Activated CD4-positive, alpha-beta T cell treated with anti-CD3 and anti-CD28 coated beads, Interleukin-2, amount 10 ng/mL, durations not matched to agents 24 days and 14 days (primary cell): ENCODE measurements at regions of chr3 and their contacts with region 1.

Region 1: DNA sequence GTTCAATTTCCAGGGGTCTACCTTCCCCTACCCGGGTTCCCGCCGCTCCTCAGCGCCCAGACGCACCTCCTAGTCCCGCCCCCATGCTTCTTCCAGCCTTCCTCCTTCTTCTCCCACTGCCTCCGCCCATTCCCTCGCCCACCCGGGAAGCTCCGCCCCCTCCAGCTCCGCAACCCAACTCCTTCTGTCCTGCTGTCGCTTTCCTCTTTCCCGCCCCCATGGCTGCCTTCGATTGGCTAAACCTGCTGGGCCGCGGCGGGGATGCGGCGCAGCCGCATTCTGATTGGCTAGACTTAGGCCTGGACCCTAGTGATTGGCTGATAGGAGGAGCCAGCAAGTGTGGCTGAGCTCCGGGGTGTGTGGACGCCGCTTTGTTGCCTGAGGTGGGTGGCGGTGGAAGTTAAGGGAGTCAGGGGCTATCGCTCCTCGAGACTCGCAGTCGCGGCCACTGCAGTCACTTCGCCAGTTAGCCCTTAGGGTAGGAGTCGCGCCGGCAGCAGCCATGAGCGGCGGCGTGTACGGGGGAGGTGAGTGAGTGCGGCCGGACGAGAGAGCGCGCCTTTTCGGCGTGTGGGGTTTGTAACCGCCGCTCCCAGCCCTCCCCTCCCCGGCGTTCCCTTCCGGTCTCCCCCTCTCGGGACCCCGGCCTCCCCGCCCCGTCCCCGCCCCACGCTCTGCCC is at the start of gene ACTL6A:
- DNase-seq: peak; percentile 99
- H3K4me3 Mint-ChIP-seq: peak within 1 kb of the TSS; percentile 98
- H3K27ac Mint-ChIP-seq: peak within 1 kb of the TSS; percentile 97
- H3K4me1 Mint-ChIP-seq: peaks cover 27% of the 10 kb centered on the region
- H3K27me3 Mint-ChIP-seq: peaks cover 19% of the 10 kb centered on the region
- total RNA-seq, gene ACTL6A: 127 and 131 TPM in 2 replicates

Region 2: DNA sequence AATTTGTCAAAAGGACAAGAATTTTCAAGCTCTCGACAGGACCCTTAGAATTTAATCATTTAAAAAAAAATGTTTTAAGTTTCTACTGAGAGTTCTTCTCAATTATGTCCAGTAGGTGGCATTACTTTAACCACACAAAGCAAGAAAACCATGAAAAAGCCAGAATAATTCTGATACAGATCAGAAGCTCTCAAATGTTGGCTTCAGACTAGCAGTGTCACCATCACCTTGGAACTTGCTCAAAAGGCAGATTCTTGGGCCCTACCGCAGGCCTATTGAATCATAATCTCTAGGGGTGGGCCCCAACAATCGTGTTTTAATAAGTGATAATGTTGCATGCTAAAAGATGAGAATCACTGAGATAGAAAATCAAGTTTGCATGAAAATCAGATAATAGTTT is 1126.0 kb before region 1 on chr3:
- intact Hi-C with region 1: loop called (anchors 2 kb)
- DNase-seq: no peak
- H3K4me3 Mint-ChIP-seq: no peak overlapping the region
- H3K27ac Mint-ChIP-seq: no peak overlapping the region
- H3K4me1 Mint-ChIP-seq: no peaks in the 10 kb centered on the region
- H3K27me3 Mint-ChIP-seq: no peaks in the 10 kb centered on the region

Region 3: DNA sequence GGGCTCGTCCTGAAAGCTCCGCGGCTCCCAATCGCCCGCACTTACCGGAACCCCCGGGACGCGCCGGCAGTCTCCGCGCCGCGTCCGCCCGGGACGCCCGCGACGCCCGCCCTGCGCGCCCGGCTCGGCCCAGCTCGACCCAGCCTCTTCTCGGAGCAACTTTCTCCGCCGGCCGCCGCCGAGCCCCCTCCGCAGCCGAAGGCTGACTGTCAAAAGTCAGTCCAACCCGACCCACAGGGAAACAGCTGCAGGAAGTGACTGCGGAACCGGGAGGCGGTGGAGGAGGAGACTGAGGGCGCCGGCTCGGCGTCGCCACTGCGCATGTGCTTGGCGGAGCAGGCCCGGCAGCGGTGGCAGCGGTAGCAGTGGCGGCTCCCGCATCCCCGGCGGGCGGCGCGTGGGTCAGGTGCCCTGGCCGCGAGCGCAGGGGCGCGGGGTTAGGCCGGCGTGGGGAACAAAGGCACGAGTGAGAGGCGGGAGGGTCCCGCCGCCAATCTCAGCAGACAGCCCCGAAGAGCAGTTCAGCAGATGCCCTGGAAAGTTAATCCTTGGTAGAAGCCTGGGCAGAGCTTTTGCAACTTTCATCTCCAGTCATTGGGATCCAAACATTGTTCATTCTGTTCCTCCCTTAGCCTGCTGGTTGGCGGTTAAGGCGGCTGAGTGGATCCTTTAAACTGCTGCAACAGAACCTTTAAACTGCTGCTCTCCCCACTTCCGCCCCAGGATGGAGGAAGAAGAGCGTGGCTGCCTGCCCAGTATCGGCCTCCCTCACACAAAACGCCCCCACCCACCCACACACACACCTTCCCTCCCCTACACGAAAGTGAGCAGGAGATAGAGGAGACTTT is 491.0 kb before region 1 on chr3 and contains the start of gene ZMAT3:
- intact Hi-C with region 1: loop called (anchors 2 kb)
- DNase-seq: peak; percentile 96
- H3K4me3 Mint-ChIP-seq: peak within 1 kb of the TSS; percentile 99
- H3K27ac Mint-ChIP-seq: peak within 1 kb of the TSS; percentile 96
- H3K4me1 Mint-ChIP-seq: peaks cover 35% of the 10 kb centered on the region
- H3K27me3 Mint-ChIP-seq: no peaks in the 10 kb centered on the region
- total RNA-seq, gene ZMAT3: 11.8 and 13.1 TPM in 2 replicates

Region 4: GRCh38 chr3:179347345-179348194 is 215.2 kb before region 1 on chr3 and contains the start of gene MFN1:
- intact Hi-C with region 1: loop called (anchors 1 kb)
- DNase-seq: peak; percentile 97
- H3K4me3 Mint-ChIP-seq: peak within 1 kb of the TSS; percentile 100
- H3K27ac Mint-ChIP-seq: peak within 1 kb of the TSS; percentile 98
- H3K4me1 Mint-ChIP-seq: peaks cover 14% of the 10 kb centered on the region
- H3K27me3 Mint-ChIP-seq: no peaks in the 10 kb centered on the region
- total RNA-seq, gene MFN1: 36.2 and 37.0 TPM in 2 replicates

Region 5: GRCh38 chr3:179363332-179363731 is 199.4 kb before region 1 on chr3:
- intact Hi-C with region 1: no loop called
- DNase-seq: no peak
- H3K4me3 Mint-ChIP-seq: no peak overlapping the region
- H3K27ac Mint-ChIP-seq: no peak overlapping the region
- H3K4me1 Mint-ChIP-seq: no peaks in the 10 kb centered on the region
- H3K27me3 Mint-ChIP-seq: no peaks in the 10 kb centered on the region

Region 6: GRCh38 chr3:179451265-179452175 is 111.2 kb before region 1 on chr3 and contains the start of gene GNB4:
- intact Hi-C with region 1: loop called (anchors 1 kb)
- DNase-seq: peak; percentile 90
- H3K4me3 Mint-ChIP-seq: peak within 1 kb of the TSS; percentile 85
- H3K27ac Mint-ChIP-seq: peak within 1 kb of the TSS; percentile 87
- H3K4me1 Mint-ChIP-seq: peaks cover 30% of the 10 kb centered on the region
- H3K27me3 Mint-ChIP-seq: peaks cover 68% of the 10 kb centered on the region
- total RNA-seq, gene GNB4: 11.8 and 14.0 TPM in 2 replicates

Region 7: GRCh38 chr3:179653096-179653797 is 90.5 kb after region 1 on chr3:
- intact Hi-C with region 1: loop called (anchors 2 kb)
- DNase-seq: peak; percentile 89
- H3K4me3 Mint-ChIP-seq: peak overlapping the region; percentile 93
- H3K27ac Mint-ChIP-seq: peak overlapping the region; percentile 92
- H3K4me1 Mint-ChIP-seq: peaks cover 17% of the 10 kb centered on the region
- H3K27me3 Mint-ChIP-seq: peaks cover 15% of the 10 kb centered on the region

Region 8: GRCh38 chr3:179695672-179696313 is 133.1 kb after region 1 on chr3:
- intact Hi-C with region 1: no loop called
- DNase-seq: no peak
- H3K4me3 Mint-ChIP-seq: no peak overlapping the region
- H3K27ac Mint-ChIP-seq: no peak overlapping the region
- H3K4me1 Mint-ChIP-seq: no peaks in the 10 kb centered on the region
- H3K27me3 Mint-ChIP-seq: no peaks in the 10 kb centered on the region